ENCODE measurements at regions of chr3 and their contacts with region 1.

Region 1: GRCh38 chr3:171491361-171491760 is 31.2 kb upstream of the TNIK start:
- DNase-seq: no peak
- ATAC-seq: no peak
- H3K4me3 ChIP-seq: no peak overlapping the region
- H3K27ac ChIP-seq: no peak overlapping the region
- H3K4me1 ChIP-seq: no peaks in the 10 kb centered on the region
- H3K27me3 ChIP-seq: no peaks in the 10 kb centered on the region
- CTCF ChIP-seq: no peak

Region 2: GRCh38 chr3:171198781-171199472 is 292.4 kb before region 1 on chr3:
- CTCF ChIA-PET with region 1: no interaction called
- POLR2A ChIA-PET with region 1: interaction called, 11 read pairs
- in situ Hi-C with region 1: no loop called
- intact Hi-C with region 1: no loop called
- DNase-seq: no peak
- ATAC-seq: no peak
- H3K4me3 ChIP-seq: no peak overlapping the region
- H3K27ac ChIP-seq: no peak overlapping the region
- H3K4me1 ChIP-seq: no peaks in the 10 kb centered on the region
- H3K27me3 ChIP-seq: peaks cover 3% of the 10 kb centered on the region; the same call in 1 of the 2 replicates
- CTCF ChIP-seq: no peak

Region 3: DNA sequence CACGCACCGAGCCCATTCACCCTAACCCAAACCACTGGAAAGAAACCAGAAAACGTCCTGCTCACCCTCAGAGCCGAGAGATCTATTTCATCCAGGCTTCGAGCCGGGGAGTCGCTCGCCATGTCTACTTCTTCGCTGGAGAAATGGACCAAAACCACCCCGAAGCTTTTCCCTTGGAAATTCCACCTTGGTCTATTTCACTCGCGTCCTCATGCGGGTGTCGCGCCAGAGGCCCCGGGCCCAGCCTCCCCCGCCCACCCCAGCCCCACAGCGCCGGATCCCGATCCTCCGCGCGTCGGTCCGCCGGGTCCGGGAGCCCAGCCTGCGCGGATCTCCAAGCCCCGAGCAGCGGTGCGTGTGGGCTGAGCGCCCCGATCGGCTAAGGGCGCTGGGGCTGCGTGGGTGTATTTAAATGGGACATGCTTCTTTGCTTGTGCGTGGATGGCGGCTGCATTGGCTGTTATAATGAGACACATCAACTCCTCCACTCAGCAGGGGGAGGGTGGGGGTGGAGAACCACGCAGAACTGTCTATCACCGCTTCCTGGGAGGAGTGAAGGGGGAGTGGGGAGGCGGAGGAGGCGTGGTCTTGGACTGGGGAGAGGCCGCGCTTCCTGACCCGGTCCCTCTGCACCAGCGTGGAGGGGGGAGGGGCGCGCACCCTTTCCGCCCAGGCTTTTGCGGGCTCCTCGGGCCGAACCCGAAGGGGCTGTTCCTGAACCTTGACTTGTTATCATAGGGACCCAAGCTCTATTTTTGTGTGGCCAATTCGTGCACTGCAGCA is 31.2 kb before region 1 on chr3 and contains the start of gene TNIK:
- CTCF ChIA-PET with region 1: interaction called, 10 read pairs
- POLR2A ChIA-PET with region 1: no interaction called
- in situ Hi-C with region 1: no loop called
- intact Hi-C with region 1: no loop called
- DNase-seq: peak; percentile 18
- ATAC-seq: peak; percentile 92
- H3K4me3 ChIP-seq: peak within 1 kb of the TSS; percentile 59 to 84
- H3K27ac ChIP-seq: peak within 1 kb of the TSS; percentile 35
- H3K4me1 ChIP-seq: peaks cover 17% of the 10 kb centered on the region
- H3K27me3 ChIP-seq: peaks cover 30% of the 10 kb centered on the region
- CTCF ChIP-seq: no peak
- total RNA-seq, gene TNIK: 1.9 TPM

Region 4: GRCh38 chr3:171514466-171514865 is 23.1 kb after region 1 on chr3:
- CTCF ChIA-PET with region 1: no interaction called
- POLR2A ChIA-PET with region 1: no interaction called
- in situ Hi-C with region 1: no loop called
- intact Hi-C with region 1: no loop called
- DNase-seq: no peak
- ATAC-seq: no peak
- H3K4me3 ChIP-seq: no peak overlapping the region
- H3K27ac ChIP-seq: no peak overlapping the region
- H3K4me1 ChIP-seq: no peaks in the 10 kb centered on the region
- H3K27me3 ChIP-seq: no peaks in the 10 kb centered on the region
- CTCF ChIP-seq: no peak; the same call in 1 of the 2 replicates

Measured in Panc1 (cell line).